Mammary epithelial cell (primary cell): ENCODE measurements at regions of chr17 and their contacts with region 1.

Region 1: GRCh38 chr17:82297714-82298537 is 19.5 kb downstream of the CD7 start:
- DNase-seq: peak; percentile 96
- H3K4me3 ChIP-seq: peak overlapping the region; percentile 17 to 58 (median 53)
- H3K27ac ChIP-seq: peak overlapping the region; percentile 97
- H3K4me1 ChIP-seq: peaks cover 67% of the 10 kb centered on the region
- H3K27me3 ChIP-seq: no peaks in the 10 kb centered on the region
- CTCF ChIP-seq: no peak

Region 2: GRCh38 chr17:82244413-82245140 is 53.3 kb before region 1 on chr17:
- CTCF ChIA-PET with region 1: interaction called, 4 read pairs
- dilution Hi-C with region 1: no loop called
- in situ Hi-C with region 1: no loop called
- intact Hi-C with region 1: loop called (anchors 1 kb)
- DNase-seq: no peak
- H3K4me3 ChIP-seq: no peak overlapping the region
- H3K27ac ChIP-seq: no peak overlapping the region
- H3K4me1 ChIP-seq: peaks cover 67% of the 10 kb centered on the region
- H3K27me3 ChIP-seq: no peaks in the 10 kb centered on the region
- CTCF ChIP-seq: peak; percentile 44 to 60

Region 3: GRCh38 chr17:82267575-82268379 is 30.1 kb before region 1 on chr17:
- CTCF ChIA-PET with region 1: no interaction called
- dilution Hi-C with region 1: loop called (anchors 5 kb)
- in situ Hi-C with region 1: no loop called
- intact Hi-C with region 1: loop called (anchors 1 kb)
- DNase-seq: peak; percentile 86
- H3K4me3 ChIP-seq: peak overlapping the region in 1 of 3 experiments; percentile 19
- H3K27ac ChIP-seq: peak overlapping the region; percentile 26
- H3K4me1 ChIP-seq: peaks cover 48% of the 10 kb centered on the region
- H3K27me3 ChIP-seq: no peaks in the 10 kb centered on the region
- CTCF ChIP-seq: no peak

Region 4: DNA sequence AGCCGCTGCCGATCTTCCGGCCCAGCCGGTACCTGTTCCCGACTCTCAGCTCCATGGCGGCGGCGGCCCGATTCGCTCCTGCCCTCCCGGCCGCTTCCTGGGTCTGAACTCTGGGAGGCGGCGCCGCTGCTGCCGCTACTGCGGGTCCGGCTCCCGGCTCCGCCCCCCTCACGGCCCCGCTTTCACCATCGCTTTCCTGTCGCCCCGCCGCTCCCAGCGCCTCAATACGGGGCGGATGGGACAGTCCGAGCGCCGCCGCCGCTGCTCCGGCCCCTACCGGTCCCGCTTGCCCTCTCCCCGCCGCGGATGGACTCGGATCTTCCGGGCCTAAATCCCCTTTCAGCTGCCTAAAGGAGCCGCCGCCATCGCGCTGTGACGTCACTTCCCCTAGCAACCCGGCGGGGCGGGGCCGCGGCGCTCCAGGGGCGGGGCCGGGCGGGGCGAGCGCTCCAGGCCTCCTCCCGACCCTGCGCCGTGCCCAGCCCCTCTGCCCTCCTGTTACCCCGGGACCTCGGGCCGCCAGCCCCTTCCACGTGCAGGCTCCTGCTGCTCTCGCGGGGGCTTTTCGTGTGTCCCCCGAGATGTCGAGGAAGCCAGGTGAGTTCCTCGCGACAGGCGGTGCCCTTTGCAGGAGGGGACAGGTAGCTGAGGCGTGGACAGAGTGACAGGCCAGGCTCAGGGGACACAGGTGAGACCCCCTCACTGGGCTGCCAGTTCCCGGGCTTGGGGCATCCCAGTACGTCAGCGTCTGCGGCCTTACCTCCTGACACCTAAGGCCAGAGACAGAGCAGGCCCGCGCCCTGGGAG is 24.4 kb before region 1 on chr17 and contains the start of gene CSNK1D:
- CTCF ChIA-PET with region 1: no interaction called
- dilution Hi-C with region 1: no loop called
- in situ Hi-C with region 1: no loop called
- intact Hi-C with region 1: loop called (anchors 1 kb)
- DNase-seq: peak; percentile 85
- H3K4me3 ChIP-seq: peak within 1 kb of the TSS; percentile 74 to 84 (median 81)
- H3K27ac ChIP-seq: peak within 1 kb of the TSS; percentile 69
- H3K4me1 ChIP-seq: peaks cover 33% of the 10 kb centered on the region
- H3K27me3 ChIP-seq: no peaks in the 10 kb centered on the region
- CTCF ChIP-seq: no peak
- total RNA-seq, gene CSNK1D: 68.7 to 163 TPM

Region 5: GRCh38 chr17:82320956-82321927 is 23.3 kb after region 1 on chr17:
- CTCF ChIA-PET with region 1: no interaction called
- dilution Hi-C with region 1: no loop called
- in situ Hi-C with region 1: no loop called
- intact Hi-C with region 1: loop called (anchors 2 kb)
- DNase-seq: no peak
- H3K4me3 ChIP-seq: peak overlapping the region in 1 of 3 experiments; percentile 21
- H3K27ac ChIP-seq: no peak overlapping the region
- H3K4me1 ChIP-seq: peaks cover 16% of the 10 kb centered on the region
- H3K27me3 ChIP-seq: no peaks in the 10 kb centered on the region
- CTCF ChIP-seq: peak; percentile 42 to 73

Region 6: GRCh38 chr17:82338858-82339633 is 41.1 kb after region 1 on chr17:
- CTCF ChIA-PET with region 1: no interaction called
- dilution Hi-C with region 1: loop called (anchors 10 kb)
- in situ Hi-C with region 1: no loop called
- intact Hi-C with region 1: loop called (anchors 5 kb)
- DNase-seq: peak; percentile 82
- H3K4me3 ChIP-seq: peak overlapping the region; percentile 6 to 39 (median 34)
- H3K27ac ChIP-seq: peak overlapping the region; percentile 62
- H3K4me1 ChIP-seq: peaks cover 25% of the 10 kb centered on the region
- H3K27me3 ChIP-seq: no peaks in the 10 kb centered on the region
- CTCF ChIP-seq: no peak

Region 7: DNA sequence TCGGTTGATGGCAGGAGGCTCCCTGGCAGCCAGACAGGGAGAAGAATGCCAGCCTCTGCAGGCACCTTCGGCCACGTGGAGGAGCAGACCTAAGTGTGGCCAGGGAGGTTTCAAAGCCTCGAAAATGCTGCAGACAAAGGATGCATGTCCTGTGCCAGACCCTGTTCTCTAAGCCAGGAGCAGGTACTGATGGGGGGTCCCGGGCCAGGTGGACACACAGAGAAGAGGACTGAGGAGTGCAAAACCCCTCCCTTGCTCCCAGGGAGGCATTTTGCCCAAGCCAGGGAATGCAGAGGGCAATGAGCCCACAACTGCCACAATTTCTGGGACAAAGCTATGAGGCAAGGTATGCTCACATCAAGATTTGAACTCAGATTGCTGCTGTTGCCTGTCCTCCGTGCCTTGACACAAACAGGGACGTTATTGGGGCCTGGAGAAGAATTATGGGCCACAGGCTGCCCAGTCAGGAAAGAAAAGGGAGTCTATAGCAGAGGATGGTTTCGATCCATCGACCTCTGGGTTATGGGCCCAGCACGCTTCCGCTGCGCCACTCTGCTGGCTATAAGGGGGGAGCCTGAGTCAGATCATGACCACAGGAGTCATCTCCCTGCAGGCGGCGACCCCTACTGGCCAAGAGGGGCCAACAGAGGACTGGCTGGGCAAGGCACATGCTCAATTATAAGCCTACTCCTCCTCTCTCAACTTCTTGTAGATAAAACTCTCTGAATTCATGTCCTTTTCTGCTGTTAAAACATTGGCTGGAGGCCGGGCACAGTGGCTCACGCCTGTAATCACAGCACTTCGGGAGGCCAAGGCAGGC is 196.5 kb after region 1 on chr17:
- CTCF ChIA-PET with region 1: no interaction called
- dilution Hi-C with region 1: no loop called
- in situ Hi-C with region 1: no loop called
- intact Hi-C with region 1: loop called (anchors 5 kb)
- DNase-seq: peak; percentile 95
- H3K4me3 ChIP-seq: no peak overlapping the region
- H3K27ac ChIP-seq: no peak overlapping the region
- H3K4me1 ChIP-seq: peaks cover 24% of the 10 kb centered on the region
- H3K27me3 ChIP-seq: no peaks in the 10 kb centered on the region
- CTCF ChIP-seq: peak; percentile 85 to 95